Endothelial cell of umbilical vein (primary cell): ENCODE measurements at regions of chr20 and their contacts with region 1.

Region 1: DNA sequence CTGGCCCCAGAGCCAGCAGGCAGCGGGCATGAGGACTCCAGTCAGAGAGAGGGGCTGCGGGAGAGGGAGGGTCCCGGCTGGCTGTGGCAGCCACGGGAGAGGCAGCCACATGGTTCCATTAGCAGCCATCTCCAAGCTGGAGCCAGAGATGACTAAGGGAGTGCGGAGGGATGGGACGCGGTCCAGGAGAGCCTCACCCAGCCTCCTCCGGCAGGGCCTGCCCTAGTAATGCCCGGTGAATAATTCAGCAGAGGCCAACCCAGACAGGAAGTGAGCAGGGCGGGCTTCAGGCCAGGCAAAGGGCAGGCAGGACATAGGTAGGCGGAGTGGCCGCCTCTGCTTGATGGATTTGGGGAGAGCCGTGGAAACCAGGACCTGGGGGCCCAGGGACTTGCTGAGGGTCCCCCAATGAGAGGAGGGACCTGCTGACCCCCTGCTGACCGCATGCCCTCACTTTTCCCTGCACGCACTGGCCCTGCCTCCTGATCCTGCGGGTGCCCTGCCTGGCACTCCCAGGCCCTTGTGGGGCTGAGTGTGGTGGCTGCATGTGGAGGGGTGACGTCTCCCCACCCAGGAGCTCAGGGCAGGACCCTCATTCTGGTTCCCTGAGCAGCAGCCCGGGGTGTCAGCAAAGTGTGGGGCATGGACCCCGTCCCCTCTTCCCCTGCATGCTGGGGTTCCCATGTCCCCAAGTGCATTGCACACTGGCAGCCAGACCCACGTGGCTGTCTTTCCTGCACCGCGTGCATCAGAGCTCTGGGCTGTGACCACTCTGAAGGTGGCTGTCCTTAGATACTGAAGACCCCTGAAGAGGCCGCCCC is 51.8 kb upstream of the SLCO4A1 start:
- DNase-seq: peak; percentile 71
- H3K4me3 ChIP-seq: no peak overlapping the region
- H3K27ac ChIP-seq: no peak overlapping the region
- H3K4me1 ChIP-seq: peaks cover 17% of the 10 kb centered on the region
- H3K27me3 ChIP-seq: no peaks in the 10 kb centered on the region
- CTCF ChIP-seq: no peak
- POLR2A ChIP-seq: no peak

Region 2: GRCh38 chr20:62561948-62562347 is 28.6 kb before region 1 on chr20:
- CTCF ChIA-PET with region 1: no interaction called
- POLR2A ChIA-PET with region 1: no interaction called
- dilution Hi-C with region 1: no loop called
- intact Hi-C with region 1: no loop called
- DNase-seq: no peak
- H3K4me3 ChIP-seq: no peak overlapping the region
- H3K27ac ChIP-seq: no peak overlapping the region
- H3K4me1 ChIP-seq: no peaks in the 10 kb centered on the region
- H3K27me3 ChIP-seq: no peaks in the 10 kb centered on the region
- CTCF ChIP-seq: no peak
- POLR2A ChIP-seq: no peak

Region 3: GRCh38 chr20:62576815-62577506 is 13.6 kb before region 1 on chr20:
- CTCF ChIA-PET with region 1: interaction called, 14 read pairs
- POLR2A ChIA-PET with region 1: no interaction called
- dilution Hi-C with region 1: no loop called
- intact Hi-C with region 1: no loop called
- DNase-seq: peak; percentile 28
- H3K4me3 ChIP-seq: no peak overlapping the region
- H3K27ac ChIP-seq: no peak overlapping the region
- H3K4me1 ChIP-seq: no peaks in the 10 kb centered on the region
- H3K27me3 ChIP-seq: peaks cover 0 to 5% of the 10 kb centered on the region in 2 experiments
- CTCF ChIP-seq: no peak
- POLR2A ChIP-seq: no peak

Region 4: DNA sequence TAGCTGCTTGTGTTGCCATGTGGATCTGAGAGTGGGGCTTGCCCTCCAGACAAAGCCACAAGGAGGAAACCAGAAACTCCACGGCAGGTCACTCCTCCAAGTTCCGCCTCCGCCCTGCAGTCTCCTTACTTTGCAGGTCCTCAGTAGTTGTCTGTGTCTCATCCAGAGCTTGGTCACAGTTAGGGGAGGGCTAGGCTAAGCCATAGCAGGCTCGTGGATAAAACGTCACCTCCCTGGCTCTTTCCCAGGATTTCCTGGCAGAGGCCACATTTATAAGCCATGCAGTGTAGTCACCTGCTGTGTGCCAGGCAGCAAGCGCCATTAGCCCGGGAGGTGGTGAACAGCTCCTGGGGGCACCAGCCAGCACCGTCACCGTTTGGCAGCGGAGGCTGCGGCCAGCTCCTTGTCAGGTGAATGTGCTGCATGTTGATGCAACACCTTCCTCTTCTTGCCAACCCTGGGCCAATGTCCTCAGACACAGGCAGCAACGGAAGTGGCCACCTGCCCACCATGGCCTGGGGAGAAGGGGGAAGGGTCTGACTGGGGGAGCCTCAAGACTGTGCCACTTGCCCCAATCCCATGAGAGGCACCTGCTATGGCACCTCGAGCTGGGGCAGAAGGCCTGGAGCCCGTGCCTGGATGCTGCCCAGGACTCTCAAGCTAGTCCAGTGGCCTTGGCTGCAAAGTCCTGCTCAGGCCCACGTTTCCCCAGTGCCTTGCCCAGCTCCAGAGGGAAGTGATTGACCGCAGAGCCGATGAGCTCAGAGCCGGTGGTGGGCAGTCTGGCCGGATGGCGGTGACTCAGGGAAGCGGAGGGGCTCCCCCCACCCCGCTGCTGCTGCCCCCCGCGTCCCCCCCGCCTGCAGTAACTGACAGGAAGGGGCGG is 12.8 kb after region 1 on chr20:
- CTCF ChIA-PET with region 1: interaction called, 5 read pairs
- POLR2A ChIA-PET with region 1: no interaction called
- dilution Hi-C with region 1: no loop called
- intact Hi-C with region 1: loop called (anchors 1 kb)
- DNase-seq: peak; percentile 86
- H3K4me3 ChIP-seq: no peak overlapping the region
- H3K27ac ChIP-seq: peak overlapping the region; percentile 78
- H3K4me1 ChIP-seq: peaks cover 16% of the 10 kb centered on the region
- H3K27me3 ChIP-seq: no peaks in the 10 kb centered on the region
- CTCF ChIP-seq: no peak
- POLR2A ChIP-seq: no peak

Region 5: GRCh38 chr20:62742979-62743776 is 152.7 kb after region 1 on chr20:
- CTCF ChIA-PET with region 1: no interaction called
- POLR2A ChIA-PET with region 1: no interaction called
- dilution Hi-C with region 1: no loop called
- intact Hi-C with region 1: no loop called
- DNase-seq: no peak
- H3K4me3 ChIP-seq: no peak overlapping the region
- H3K27ac ChIP-seq: no peak overlapping the region
- H3K4me1 ChIP-seq: peaks cover 26% of the 10 kb centered on the region
- H3K27me3 ChIP-seq: no peaks in the 10 kb centered on the region
- CTCF ChIP-seq: no peak
- POLR2A ChIP-seq: no peak